Activated CD4-positive, alpha-beta memory T cell treated with anti-CD3 and anti-CD28 coated beads for 36 hours (primary cell): ENCODE measurements at regions of chr1 and their contacts with region 1.

Region 1: DNA sequence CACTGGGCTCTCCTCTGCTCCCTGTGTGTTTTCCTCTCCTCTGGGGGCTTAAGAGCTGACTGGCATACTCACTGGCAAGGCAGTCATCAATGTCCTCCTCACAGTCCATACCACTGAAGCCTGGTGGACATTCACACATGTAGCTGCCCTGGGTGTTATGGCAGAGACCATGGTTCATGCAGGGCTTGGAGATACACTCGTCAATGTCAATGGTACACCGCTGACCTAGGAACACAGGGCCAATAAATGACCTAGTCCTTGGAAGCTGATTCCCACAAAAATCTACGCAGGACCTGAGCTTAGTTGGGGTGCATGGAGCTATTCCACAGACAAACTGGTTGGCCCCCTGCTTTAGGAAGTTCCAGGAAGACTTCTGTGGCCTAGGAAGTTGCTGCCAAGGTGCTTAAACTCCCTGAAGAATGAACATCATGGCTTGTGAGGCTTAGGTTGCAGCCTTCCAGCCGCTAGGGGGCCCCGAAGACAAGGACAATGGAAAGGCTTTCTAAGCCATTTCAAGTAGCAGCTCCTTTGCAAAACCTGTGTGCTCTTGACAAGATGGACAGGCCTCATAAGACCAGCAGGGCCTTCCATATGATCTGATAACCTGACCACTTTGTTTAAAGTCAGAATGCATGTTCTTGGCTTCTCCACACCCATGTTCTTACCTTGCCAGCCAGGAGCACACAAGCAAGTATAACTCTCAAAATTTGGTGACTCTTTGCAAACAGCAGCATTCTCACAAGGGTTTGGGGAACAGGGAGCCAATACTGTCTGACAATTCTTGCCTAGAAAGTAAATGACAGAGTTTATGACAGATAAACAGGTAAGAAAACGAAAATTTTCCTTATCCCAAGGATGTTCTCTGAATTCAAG is 52.3 kb upstream of the ADAM30 start:
- DNase-seq: peak; percentile 82
- H3K4me3 Mint-ChIP-seq: no peak overlapping the region
- H3K27ac Mint-ChIP-seq: no peak overlapping the region
- H3K4me1 Mint-ChIP-seq: peaks cover 4% of the 10 kb centered on the region
- H3K27me3 Mint-ChIP-seq: no peaks in the 10 kb centered on the region

Region 2: GRCh38 chr1:119773711-119774241 is 174.8 kb before region 1 on chr1:
- CTCF ChIA-PET with region 1: no interaction called
- POLR2A ChIA-PET with region 1: no interaction called
- intact Hi-C with region 1: no loop called
- DNase-seq: no peak
- H3K4me3 Mint-ChIP-seq: no peak overlapping the region
- H3K27ac Mint-ChIP-seq: no peak overlapping the region
- H3K4me1 Mint-ChIP-seq: no peaks in the 10 kb centered on the region
- H3K27me3 Mint-ChIP-seq: peaks cover 3% of the 10 kb centered on the region

Region 3: GRCh38 chr1:119885903-119886783 is 62.4 kb before region 1 on chr1:
- CTCF ChIA-PET with region 1: interaction called, 12 read pairs
- POLR2A ChIA-PET with region 1: no interaction called
- intact Hi-C with region 1: no loop called
- DNase-seq: peak; percentile 75
- H3K4me3 Mint-ChIP-seq: no peak overlapping the region
- H3K27ac Mint-ChIP-seq: no peak overlapping the region
- H3K4me1 Mint-ChIP-seq: no peaks in the 10 kb centered on the region
- H3K27me3 Mint-ChIP-seq: peaks cover 22% of the 10 kb centered on the region

Region 4: GRCh38 chr1:119895986-119896702 is 52.4 kb before region 1 on chr1 and contains the start of gene ADAM30:
- CTCF ChIA-PET with region 1: no interaction called
- POLR2A ChIA-PET with region 1: no interaction called
- intact Hi-C with region 1: no loop called
- DNase-seq: no peak
- H3K4me3 Mint-ChIP-seq: no peak within 1 kb of the TSS
- H3K27ac Mint-ChIP-seq: no peak within 1 kb of the TSS
- H3K4me1 Mint-ChIP-seq: peaks cover 13% of the 10 kb centered on the region
- H3K27me3 Mint-ChIP-seq: peaks cover 10% of the 10 kb centered on the region
- total RNA-seq, gene ADAM30: not detected

Region 5: GRCh38 chr1:119935373-119935772 is 13.2 kb before region 1 on chr1:
- CTCF ChIA-PET with region 1: interaction called, 13 read pairs
- POLR2A ChIA-PET with region 1: no interaction called
- intact Hi-C with region 1: no loop called
- DNase-seq: no peak
- H3K4me3 Mint-ChIP-seq: no peak overlapping the region
- H3K27ac Mint-ChIP-seq: no peak overlapping the region
- H3K4me1 Mint-ChIP-seq: no peaks in the 10 kb centered on the region
- H3K27me3 Mint-ChIP-seq: no peaks in the 10 kb centered on the region

Region 6: DNA sequence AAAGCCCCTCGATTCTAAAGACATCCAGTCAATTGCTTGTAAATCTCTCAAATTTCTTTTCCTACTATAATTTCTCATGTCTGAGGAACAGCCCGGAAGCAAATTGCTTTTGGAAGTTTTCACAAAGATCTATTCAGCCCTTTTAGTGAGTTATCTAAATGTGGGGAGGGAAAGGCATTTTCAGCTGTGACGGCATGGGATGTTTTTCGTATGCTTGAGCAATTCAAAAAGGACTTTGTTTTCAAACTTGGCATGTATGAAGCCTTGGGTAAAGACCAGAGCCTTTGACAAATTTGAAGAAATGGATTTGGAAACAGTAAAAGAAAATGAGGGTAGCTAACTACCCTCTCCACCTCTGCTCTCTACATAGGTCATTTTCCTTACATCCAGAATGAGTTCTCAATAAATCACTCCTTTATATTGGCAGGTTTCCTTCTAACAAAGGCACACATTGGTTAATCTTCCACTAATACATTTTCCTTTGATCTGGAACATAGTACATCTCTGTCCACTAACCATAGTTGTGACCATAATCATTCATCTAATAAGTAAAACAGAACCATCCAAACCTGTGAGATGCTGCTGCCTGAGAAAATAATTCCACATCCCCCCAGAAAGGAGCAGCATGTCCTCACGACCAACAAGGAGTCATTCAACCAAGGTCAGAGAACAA is 13.9 kb after region 1 on chr1:
- CTCF ChIA-PET with region 1: interaction called, 28 read pairs
- POLR2A ChIA-PET with region 1: no interaction called
- intact Hi-C with region 1: no loop called
- DNase-seq: no peak
- H3K4me3 Mint-ChIP-seq: no peak overlapping the region
- H3K27ac Mint-ChIP-seq: no peak overlapping the region
- H3K4me1 Mint-ChIP-seq: no peaks in the 10 kb centered on the region
- H3K27me3 Mint-ChIP-seq: no peaks in the 10 kb centered on the region

Region 7: GRCh38 chr1:119968068-119968492 is 19.5 kb after region 1 on chr1:
- CTCF ChIA-PET with region 1: interaction called, 23 read pairs
- POLR2A ChIA-PET with region 1: no interaction called
- intact Hi-C with region 1: no loop called
- DNase-seq: peak; percentile 89
- H3K4me3 Mint-ChIP-seq: no peak overlapping the region
- H3K27ac Mint-ChIP-seq: peak overlapping the region; percentile 25
- H3K4me1 Mint-ChIP-seq: peaks cover 6% of the 10 kb centered on the region
- H3K27me3 Mint-ChIP-seq: no peaks in the 10 kb centered on the region